Astrocyte of the spinal cord (primary cell): ENCODE measurements at regions of chr13 and their contacts with region 1.

Region 1: GRCh38 chr13:98653463-98653985 is 76.6 kb upstream of the STK24 start:
- DNase-seq: peak; percentile 76
- H3K4me3 ChIP-seq: no peak overlapping the region
- CTCF ChIP-seq: peak; percentile 90

Region 2: GRCh38 chr13:98445340-98446233 is 207.9 kb before region 1 on chr13:
- in situ Hi-C with region 1: loop called (anchors 25 kb)
- DNase-seq: peak; percentile 56
- H3K4me3 ChIP-seq: no peak overlapping the region
- CTCF ChIP-seq: peak; percentile 98

Region 3: GRCh38 chr13:98970330-98970729 is 316.8 kb after region 1 on chr13:
- in situ Hi-C with region 1: no loop called
- DNase-seq: no peak
- H3K4me3 ChIP-seq: no peak overlapping the region
- CTCF ChIP-seq: no peak

Region 4: GRCh38 chr13:99214232-99214631 is 560.7 kb after region 1 on chr13:
- in situ Hi-C with region 1: no loop called
- DNase-seq: no peak
- H3K4me3 ChIP-seq: no peak overlapping the region
- CTCF ChIP-seq: no peak

Region 5: DNA sequence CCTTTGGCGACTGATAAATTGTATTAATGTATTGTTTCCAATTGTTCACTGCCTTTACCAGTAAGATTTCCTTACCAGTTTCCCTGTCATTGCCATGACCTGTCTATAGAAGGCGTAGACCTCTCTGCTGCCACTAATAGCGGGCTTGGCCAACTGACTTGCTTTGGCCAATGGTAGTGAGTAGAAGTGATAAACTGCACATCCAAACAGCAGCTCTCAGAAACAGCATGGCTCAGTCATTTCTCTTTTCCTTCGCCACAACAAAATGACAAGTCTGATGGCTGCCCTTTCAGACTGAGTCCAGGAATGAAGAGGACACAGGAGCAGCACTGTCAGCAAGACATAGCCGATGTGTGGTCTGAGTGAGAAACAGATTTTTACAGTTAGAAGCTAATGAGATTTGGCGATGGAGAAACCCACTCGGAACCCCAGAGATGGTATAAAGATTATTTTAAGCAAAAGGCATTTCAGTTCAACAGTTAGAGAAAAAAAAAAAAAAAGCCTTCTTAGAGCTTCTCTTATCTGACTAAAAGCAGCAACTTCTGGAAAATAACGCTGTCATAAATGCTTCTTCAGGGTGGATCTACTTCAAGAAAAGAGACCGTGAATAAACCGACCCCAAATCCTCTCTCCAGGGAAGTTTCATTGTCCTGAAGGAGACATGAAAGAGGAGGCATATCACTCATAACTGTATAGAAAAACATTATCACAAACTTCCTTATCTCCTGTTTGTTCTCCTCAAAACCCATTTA is 805.8 kb after region 1 on chr13:
- in situ Hi-C with region 1: no loop called
- DNase-seq: no peak
- H3K4me3 ChIP-seq: no peak overlapping the region
- CTCF ChIP-seq: no peak